Ascending aorta (tissue), 2 donors: ENCODE measurements at regions of chr11 and their contacts with region 1.

Region 1: DNA sequence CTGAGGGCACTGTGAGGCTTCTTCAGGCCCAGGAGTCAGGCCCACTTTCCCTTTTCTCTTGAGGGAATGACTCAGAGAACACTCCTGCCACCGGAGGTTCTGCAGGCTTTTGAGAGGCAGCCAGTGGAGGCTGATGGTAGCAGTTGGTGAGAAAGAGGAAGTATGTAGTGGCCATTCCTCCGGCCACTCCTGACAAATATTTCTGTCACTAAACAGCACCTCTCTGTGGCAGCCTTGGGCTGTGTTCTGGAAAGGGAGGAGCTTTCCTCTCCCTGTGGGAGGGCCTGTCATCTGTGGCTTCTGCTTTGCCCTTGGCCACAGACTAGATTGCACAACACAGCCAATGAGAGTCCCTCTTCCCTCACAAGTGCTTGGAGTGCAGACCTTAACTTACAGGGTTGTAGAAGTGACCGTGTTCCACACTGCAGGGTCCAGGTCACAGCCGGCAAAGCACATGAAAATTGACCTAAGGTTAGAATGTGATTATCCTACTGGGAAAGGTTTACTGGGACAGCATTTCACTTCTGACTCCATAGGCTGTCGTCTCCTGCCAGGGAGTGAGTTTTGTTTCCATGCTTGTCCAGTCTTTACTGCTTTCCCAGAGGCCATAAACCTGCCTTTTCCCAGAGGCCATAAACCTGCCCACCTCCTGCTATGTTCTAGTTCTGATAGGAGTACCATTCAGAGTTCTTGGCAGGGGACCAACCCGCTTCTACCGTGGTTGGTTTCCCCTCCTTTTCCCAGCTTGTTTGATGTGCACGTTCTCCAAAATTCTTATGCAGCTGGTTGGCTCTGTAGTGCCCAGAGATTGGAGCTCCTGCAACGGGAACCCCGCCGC is 33.3 kb downstream of the MARK2 start:
- DNase-seq: peak; percentile 72 to 95
- H3K4me3 ChIP-seq: peak overlapping the region in 1 of 2 donors; percentile 1
- H3K27ac ChIP-seq: peak overlapping the region; percentile 38 to 48
- H3K4me1 ChIP-seq: peaks cover 20 to 54% of the 10 kb centered on the region in 2 donors
- H3K27me3 ChIP-seq: no peaks in the 10 kb centered on the region
- CTCF ChIP-seq: peak; percentile 44 to 61 (median 50)

Region 2: GRCh38 chr11:63832336-63832735 is 39.8 kb before region 1 on chr11:
- intact Hi-C with region 1: no loop called
- DNase-seq: no peak
- H3K4me3 ChIP-seq: no peak overlapping the region
- H3K27ac ChIP-seq: no peak overlapping the region
- H3K4me1 ChIP-seq: peaks cover 0 to 1% of the 10 kb centered on the region in 2 donors
- H3K27me3 ChIP-seq: no peaks in the 10 kb centered on the region
- CTCF ChIP-seq: no peak

Region 3: GRCh38 chr11:63916837-63917691 is 44.9 kb after region 1 on chr11 and contains the start of gene RCOR2:
- intact Hi-C with region 1: loop called (anchors 2 kb)
- DNase-seq: peak in 1 of 2 donors; percentile 85
- H3K4me3 ChIP-seq: peak within 1 kb of the TSS; percentile 63 to 67
- H3K27ac ChIP-seq: peak within 1 kb of the TSS; percentile 90 to 92
- H3K4me1 ChIP-seq: peaks cover 23 to 41% of the 10 kb centered on the region in 2 donors
- H3K27me3 ChIP-seq: no peaks in the 10 kb centered on the region
- CTCF ChIP-seq: no peak
- total RNA-seq, gene RCOR2: not detected